ENCODE measurements at regions of chr4 and their contacts with region 1.

Region 1: GRCh38 chr4:48340965-48341775 is at the start of gene SLAIN2:
- DNase-seq: peak; percentile 98
- H3K4me3 Mint-ChIP-seq: peak within 1 kb of the TSS; percentile 98
- H3K27ac Mint-ChIP-seq: peak within 1 kb of the TSS; percentile 98
- H3K4me1 Mint-ChIP-seq: peaks cover 74% of the 10 kb centered on the region
- H3K27me3 Mint-ChIP-seq: no peaks in the 10 kb centered on the region
- total RNA-seq, gene SLAIN2: 71.4 and 79.4 TPM in 2 replicates

Region 2: GRCh38 chr4:48269861-48270522 is 71.2 kb before region 1 on chr4:
- intact Hi-C with region 1: loop called (anchors 1 kb)
- DNase-seq: peak; percentile 78
- H3K4me3 Mint-ChIP-seq: peak overlapping the region; percentile 89
- H3K27ac Mint-ChIP-seq: peak overlapping the region; percentile 74
- H3K4me1 Mint-ChIP-seq: peaks cover 16% of the 10 kb centered on the region
- H3K27me3 Mint-ChIP-seq: no peaks in the 10 kb centered on the region

Region 3: DNA sequence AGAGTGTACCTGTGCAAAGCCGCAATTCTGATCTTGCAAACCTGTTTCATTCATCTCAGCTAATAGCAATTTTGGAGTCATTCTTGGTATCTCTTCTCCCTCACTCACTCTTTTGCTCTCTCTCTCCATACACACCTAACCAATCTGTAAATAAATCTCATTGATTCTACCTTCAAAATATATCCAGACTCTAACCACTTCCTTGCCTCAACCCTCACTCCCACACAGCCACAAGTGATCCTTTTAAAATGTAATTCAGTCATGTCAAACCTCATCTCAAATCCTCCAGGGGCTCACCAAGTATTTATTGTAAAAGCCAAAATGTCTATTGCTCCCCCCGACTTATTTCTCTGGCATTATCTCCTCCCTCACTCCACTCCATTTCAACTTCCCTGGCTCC is 90.2 kb after region 1 on chr4:
- intact Hi-C with region 1: loop called (anchors 2 kb)
- DNase-seq: no peak
- H3K4me3 Mint-ChIP-seq: no peak overlapping the region
- H3K27ac Mint-ChIP-seq: peak overlapping the region; percentile 53
- H3K4me1 Mint-ChIP-seq: peaks cover 49% of the 10 kb centered on the region
- H3K27me3 Mint-ChIP-seq: no peaks in the 10 kb centered on the region

Region 4: GRCh38 chr4:48499551-48500066 is 158.4 kb after region 1 on chr4:
- intact Hi-C with region 1: loop called (anchors 5 kb)
- DNase-seq: no peak
- H3K4me3 Mint-ChIP-seq: no peak overlapping the region
- H3K27ac Mint-ChIP-seq: peak overlapping the region; percentile 18
- H3K4me1 Mint-ChIP-seq: peaks cover 15% of the 10 kb centered on the region
- H3K27me3 Mint-ChIP-seq: no peaks in the 10 kb centered on the region